ENCODE measurements at regions of chr10 and their contacts with region 1.

Region 1: GRCh38 chr10:88932539-88933256 is 19.9 kb downstream of the ACTA2 start:
- DNase-seq: peak; percentile 68 to 88
- H3K4me3 ChIP-seq: no peak overlapping the region
- CTCF ChIP-seq: peak in 1 of 3 donors; percentile 93
- POLR2A ChIP-seq: no peak

Region 2: DNA sequence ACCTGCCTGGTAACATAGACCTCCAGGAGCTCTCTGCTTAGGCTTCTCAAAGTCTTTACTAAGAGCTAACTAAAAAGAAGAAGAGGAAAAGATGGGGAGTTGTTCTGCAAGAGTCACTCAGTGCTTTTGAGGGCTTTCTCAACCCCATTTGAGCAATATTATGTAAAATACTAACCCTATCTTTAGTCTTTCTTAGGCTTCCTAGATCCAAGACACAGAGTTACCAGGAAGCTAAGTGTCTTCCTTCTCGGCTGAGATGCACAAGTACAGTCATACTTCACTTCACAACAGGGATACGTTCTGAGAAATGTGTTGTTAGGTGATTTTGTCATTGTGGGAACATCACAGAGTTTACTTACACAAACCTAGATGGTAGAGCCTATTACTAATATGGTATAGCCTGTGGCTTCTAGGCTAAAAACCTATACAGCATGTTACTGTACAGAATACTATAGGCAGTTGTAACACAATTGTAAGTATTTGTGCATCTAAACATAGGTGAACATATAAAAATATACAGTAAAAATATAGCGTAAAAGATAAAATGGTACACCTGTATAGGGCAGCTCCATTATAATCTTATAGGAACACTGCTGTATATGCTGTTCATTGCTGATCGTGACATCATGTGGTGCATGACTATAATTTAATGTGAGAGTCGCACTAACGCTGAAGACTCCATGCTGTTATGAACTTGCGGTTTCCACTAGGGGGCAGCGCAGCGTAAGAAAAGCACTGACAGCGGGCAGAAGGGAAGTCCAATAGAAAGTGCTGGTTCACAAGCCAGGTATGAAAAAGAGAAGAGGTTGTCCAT is 97.4 kb before region 1 on chr10:
- intact Hi-C with region 1: loop called (anchors 5 kb)
- DNase-seq: peak; percentile 82 to 96
- H3K4me3 ChIP-seq: no peak overlapping the region
- CTCF ChIP-seq: peak in 1 of 3 donors; percentile 52
- POLR2A ChIP-seq: no peak

Region 3: DNA sequence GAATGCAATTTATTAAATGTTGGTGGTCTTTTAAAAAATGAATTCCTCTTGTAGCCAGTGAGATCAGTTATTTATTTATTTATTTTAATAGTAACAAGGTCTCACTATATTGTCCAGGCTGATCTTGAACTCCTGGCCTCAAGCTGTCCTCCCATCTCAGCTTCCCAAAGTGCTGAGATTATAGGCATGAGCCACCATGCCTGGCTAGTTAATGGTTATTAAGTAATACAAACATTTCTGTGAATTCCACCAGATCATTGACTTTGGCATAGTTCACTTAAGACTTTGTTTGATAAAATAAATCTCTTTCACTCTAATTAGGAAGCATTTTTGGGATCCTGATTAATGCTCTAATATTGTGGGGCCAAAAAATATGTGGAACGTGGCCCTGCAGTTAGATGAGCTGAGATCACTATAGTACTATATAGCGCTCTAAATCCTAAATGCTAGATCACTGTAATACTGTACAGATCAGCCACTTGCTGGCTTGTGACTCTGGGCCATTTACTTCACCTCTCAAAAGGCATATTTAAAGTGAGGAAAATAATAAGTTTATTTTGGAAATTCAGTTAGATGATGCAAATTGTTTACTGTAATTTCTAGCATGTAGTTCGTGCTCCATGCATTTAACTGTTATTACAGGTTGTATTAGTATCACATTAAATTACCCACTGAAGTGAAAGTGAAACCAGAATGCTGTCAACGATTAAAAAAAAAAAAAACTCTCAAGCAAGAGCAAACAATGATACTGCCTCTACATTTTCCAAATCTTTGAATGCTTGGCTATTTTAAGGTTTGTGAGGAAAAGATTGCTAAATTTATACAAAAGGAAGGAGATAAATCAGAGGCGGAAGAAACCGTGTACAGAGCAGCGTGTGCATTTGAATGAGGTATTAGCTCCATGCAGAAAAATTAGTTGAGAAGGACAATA is 42.0 kb after region 1 on chr10:
- intact Hi-C with region 1: no loop called
- DNase-seq: no peak
- H3K4me3 ChIP-seq: no peak overlapping the region
- CTCF ChIP-seq: no peak
- POLR2A ChIP-seq: no peak

Region 4: GRCh38 chr10:88986549-88987242 is 54.0 kb after region 1 on chr10:
- intact Hi-C with region 1: loop called (anchors 5 kb)
- DNase-seq: no peak
- H3K4me3 ChIP-seq: no peak overlapping the region
- CTCF ChIP-seq: no peak
- POLR2A ChIP-seq: no peak

Region 5: DNA sequence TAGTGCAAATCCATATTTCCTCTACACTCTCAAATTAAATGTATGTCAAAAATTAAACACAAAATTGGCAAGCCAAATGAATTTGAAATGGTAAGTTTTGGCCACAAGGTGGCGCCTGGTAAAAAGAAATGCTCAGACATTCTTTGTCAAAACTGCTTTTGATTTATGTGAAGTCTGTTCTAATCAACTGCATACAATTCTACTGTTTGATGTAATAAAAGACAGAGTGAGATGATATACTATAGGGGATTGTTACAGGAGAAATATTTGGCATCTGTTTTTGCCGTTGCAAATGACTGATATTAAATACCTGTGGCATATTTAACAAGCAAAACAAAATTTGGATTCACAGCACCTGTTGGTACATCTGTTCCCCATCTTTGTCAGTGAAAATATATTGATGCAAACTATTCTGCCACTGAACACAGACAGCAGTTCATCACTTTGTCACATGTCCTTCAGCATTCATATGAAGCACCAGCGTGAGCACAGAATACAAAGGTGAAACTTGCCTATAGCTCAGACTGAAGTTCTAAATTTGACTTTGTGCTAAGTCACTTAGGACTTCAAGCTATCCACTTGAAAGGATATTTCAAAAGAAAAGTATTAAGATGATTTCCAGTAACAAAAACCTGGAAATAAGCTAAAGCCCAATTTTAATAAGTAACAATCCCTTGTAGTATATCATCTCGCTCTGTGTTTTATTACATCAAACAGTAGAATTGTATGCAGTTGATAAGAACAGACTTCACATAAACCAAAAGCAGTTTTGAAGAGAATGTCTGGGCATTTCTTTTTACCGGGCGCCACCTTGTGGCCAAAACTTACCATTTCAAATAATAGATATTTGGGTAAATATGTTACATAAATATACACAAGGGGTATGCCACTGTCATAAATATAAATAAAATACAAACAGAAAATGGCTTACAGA is 284.6 kb after region 1 on chr10:
- intact Hi-C with region 1: loop called (anchors 5 kb)
- DNase-seq: peak in 1 of 2 donors; percentile 46
- H3K4me3 ChIP-seq: no peak overlapping the region
- CTCF ChIP-seq: peak in 1 of 3 donors; percentile 8
- POLR2A ChIP-seq: no peak